ENCODE measurements at regions of chr20 and their contacts with region 1.

Region 1: GRCh38 chr20:36472637-36473081 is 68.7 kb upstream of the MYL9 start:
- DNase-seq: peak; percentile 73
- H3K4me3 ChIP-seq: peak overlapping the region; percentile 27 to 40 (median 31)
- H3K27ac ChIP-seq: peak overlapping the region; percentile 61
- H3K4me1 ChIP-seq: peaks cover 39% of the 10 kb centered on the region
- H3K27me3 ChIP-seq: no peaks in the 10 kb centered on the region
- CTCF ChIP-seq: no peak

Region 2: DNA sequence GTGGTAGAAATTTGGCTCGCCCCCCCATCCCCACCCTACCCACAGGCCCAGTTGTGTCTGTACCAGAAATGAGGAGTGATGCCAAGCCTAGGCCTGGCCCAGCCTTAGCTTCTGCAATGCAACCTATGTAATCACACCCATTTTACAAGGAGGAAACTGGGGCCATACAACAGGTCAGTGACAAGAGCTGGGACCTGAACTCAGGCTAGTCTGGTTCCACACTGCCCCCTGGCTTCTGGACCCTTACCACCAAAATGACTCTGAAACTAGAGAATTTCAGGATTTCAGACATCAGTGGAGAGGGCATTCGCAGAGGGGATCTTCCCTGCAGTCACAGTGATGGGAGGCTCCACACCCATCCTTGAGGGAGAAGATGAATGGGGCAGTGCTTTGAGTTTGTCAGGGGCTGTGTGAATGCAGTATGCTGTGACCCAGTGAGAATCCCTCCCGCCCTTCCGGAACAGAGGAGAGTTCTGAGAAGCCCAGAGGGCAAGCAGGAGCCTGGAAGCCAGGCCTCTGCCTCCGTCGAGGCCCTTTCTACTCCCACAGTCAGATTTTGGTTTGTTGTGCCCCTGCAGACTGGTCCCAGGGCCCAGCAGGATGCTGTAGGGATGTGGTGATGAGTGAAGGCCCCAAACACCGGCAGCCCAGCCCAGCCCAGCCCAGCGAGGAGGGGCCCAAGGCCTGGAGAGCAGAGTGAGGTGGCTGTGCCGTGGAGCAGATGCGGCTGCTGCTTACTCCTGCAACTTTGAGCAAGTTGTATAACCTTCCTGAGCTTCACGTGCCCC is 20.5 kb after region 1 on chr20:
- CTCF ChIA-PET with region 1: no interaction called
- dilution Hi-C with region 1: no loop called
- in situ Hi-C with region 1: no loop called
- intact Hi-C with region 1: loop called (anchors 2 kb)
- DNase-seq: no peak
- H3K4me3 ChIP-seq: no peak overlapping the region
- H3K27ac ChIP-seq: no peak overlapping the region
- H3K4me1 ChIP-seq: peaks cover 41% of the 10 kb centered on the region
- H3K27me3 ChIP-seq: no peaks in the 10 kb centered on the region
- CTCF ChIP-seq: peak in 1 of 2 donors; percentile 42

Region 3: DNA sequence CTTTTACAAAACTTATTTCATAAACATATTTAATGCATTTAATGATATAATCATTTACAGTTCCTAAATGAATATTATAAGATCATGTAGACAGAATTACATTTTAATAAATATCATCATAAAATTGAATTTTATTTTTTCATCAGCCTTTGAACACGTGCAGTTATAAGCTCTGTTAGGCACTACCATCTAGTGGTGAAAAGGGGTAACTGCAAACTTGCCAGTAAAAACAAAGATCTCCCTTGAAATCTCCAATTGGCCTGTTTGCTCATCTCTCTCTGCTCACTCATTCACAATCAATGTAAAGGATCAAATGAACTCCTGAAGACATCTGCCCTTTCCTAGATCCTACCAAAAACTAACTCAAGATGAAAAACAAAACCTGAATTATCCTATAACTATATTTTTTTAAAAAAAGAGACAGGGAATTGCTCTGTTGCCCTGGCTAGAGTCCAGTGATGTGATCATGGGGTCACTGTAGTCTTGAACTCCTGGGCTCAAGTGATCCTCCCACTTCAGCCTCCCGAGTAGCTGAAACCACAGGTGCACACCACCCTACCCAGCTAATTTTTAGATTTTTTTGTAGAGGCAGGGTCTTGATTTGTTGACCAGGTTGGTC is 447.2 kb after region 1 on chr20:
- CTCF ChIA-PET with region 1: interaction called, 11 read pairs
- dilution Hi-C with region 1: no loop called
- in situ Hi-C with region 1: no loop called
- intact Hi-C with region 1: no loop called
- DNase-seq: peak; percentile 42
- H3K4me3 ChIP-seq: no peak overlapping the region
- H3K27ac ChIP-seq: no peak overlapping the region
- H3K4me1 ChIP-seq: no peaks in the 10 kb centered on the region
- H3K27me3 ChIP-seq: no peaks in the 10 kb centered on the region
- CTCF ChIP-seq: peak; percentile 89 to 92